AG04450 (cell line): ENCODE measurements at regions of chr19 and their contacts with region 1.

Region 1: GRCh38 chr19:48881741-48882657 is 9.8 kb downstream of the PPP1R15A start:
- DNase-seq: no peak
- H3K4me3 ChIP-seq: no peak overlapping the region
- H3K27ac ChIP-seq: no peak overlapping the region
- H3K27me3 ChIP-seq: no peaks in the 10 kb centered on the region
- CTCF ChIP-seq: no peak

Region 2: GRCh38 chr19:48899781-48900476 is 17.9 kb after region 1 on chr19 and contains the start of gene NUCB1:
- CTCF ChIA-PET with region 1: interaction called, 3 read pairs
- POLR2A ChIA-PET with region 1: interaction called, 16 read pairs
- DNase-seq: peak; percentile 96
- H3K4me3 ChIP-seq: peak within 1 kb of the TSS; percentile 94
- H3K27ac ChIP-seq: peak within 1 kb of the TSS; percentile 84
- H3K27me3 ChIP-seq: no peaks in the 10 kb centered on the region
- CTCF ChIP-seq: peak; percentile 45
- polyA plus RNA-seq, gene NUCB1: 123 and 130 TPM in 2 replicates

Region 3: DNA sequence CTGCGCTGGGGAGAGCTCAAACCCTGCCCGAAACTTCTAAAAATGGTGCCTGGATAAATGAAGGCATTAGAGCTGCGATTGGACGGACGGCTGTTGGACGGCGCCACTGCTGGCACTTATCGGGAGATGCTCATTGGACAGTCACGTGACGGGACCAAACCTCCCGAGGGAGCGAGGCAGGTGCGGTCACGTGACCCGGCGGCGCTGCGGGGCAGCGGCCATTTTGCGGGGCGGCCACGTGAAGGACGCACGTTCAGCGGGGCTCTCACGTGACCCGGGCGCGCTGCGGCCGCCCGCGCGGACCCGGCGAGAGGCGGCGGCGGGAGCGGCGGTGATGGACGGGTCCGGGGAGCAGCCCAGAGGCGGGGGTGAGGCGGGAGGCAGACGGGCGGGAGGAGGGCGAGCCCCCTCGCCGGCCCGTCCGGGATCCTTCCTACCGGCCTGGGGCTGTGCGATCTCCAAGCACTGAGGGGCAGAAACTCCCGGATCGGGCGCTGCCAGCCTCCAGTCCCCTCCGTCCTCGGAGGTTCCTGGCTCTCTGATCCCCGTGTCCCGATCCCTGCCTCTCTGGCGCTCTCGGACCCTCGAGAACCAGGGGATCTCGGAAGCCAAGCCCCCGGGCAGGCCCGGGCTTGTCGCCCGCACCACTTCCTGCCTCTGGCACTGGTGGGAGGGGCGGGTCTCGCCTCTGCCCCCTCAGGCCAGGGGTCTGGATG is 72.8 kb after region 1 on chr19 and contains the start of gene BAX:
- CTCF ChIA-PET with region 1: no interaction called
- POLR2A ChIA-PET with region 1: interaction called, 16 read pairs
- DNase-seq: peak; percentile 87
- H3K4me3 ChIP-seq: peak within 1 kb of the TSS; percentile 94
- H3K27ac ChIP-seq: peak within 1 kb of the TSS; percentile 95
- H3K27me3 ChIP-seq: no peaks in the 10 kb centered on the region
- CTCF ChIP-seq: 0 out of 2 replicates have a peak, but pooled peaks have one; percentile 3
- polyA plus RNA-seq, gene BAX: 110 and 147 TPM in 2 replicates

Region 4: GRCh38 chr19:50432221-50433028 is 1550.4 kb after region 1 on chr19 and contains the start of gene MYBPC2:
- CTCF ChIA-PET with region 1: no interaction called
- POLR2A ChIA-PET with region 1: no interaction called
- DNase-seq: no peak
- H3K4me3 ChIP-seq: peak within 1 kb of the TSS; percentile 67
- H3K27ac ChIP-seq: no peak within 1 kb of the TSS
- H3K27me3 ChIP-seq: peaks cover 37% of the 10 kb centered on the region
- CTCF ChIP-seq: no peak
- polyA plus RNA-seq, gene MYBPC2: not detected in 2 replicates